GM10248 (cell line): ENCODE measurements at regions of chr6 and their contacts with region 1.

Region 1: GRCh38 chr6:52647199-52647598 is 23.7 kb upstream of the TMEM14A start:
- DNase-seq: no peak
- CTCF ChIP-seq: no peak

Region 2: DNA sequence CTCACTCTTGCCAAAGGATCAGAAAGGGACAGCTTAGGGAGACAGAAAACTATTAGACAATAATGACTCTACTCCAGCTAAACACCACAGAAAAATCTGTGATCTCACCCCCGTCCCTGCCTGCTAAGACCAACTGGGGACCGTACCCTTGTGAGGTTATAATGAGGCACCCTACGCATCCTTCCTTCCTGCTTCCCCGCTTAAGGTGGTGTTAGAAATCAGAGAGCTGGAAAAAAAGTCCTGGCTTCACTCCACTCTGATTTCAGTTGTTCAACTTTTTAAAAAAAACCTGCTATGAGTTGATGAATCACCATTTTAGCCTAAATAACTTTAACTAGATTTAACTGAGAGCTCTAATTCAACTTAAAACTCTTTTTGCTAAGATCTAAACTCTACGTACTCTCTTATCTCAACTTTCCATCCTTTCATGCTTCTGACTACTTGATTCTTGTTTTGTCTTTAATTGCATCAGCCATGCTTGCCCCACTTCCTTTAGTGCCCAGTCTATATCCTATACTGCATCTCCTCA is 12.1 kb before region 1 on chr6:
- CTCF ChIA-PET with region 1: interaction called, 40 read pairs
- POLR2A ChIA-PET with region 1: no interaction called
- DNase-seq: no peak
- CTCF ChIP-seq: no peak